Testis (tissue), 5 donors: ENCODE measurements at regions of chr9 and their contacts with region 1.

Region 1: DNA sequence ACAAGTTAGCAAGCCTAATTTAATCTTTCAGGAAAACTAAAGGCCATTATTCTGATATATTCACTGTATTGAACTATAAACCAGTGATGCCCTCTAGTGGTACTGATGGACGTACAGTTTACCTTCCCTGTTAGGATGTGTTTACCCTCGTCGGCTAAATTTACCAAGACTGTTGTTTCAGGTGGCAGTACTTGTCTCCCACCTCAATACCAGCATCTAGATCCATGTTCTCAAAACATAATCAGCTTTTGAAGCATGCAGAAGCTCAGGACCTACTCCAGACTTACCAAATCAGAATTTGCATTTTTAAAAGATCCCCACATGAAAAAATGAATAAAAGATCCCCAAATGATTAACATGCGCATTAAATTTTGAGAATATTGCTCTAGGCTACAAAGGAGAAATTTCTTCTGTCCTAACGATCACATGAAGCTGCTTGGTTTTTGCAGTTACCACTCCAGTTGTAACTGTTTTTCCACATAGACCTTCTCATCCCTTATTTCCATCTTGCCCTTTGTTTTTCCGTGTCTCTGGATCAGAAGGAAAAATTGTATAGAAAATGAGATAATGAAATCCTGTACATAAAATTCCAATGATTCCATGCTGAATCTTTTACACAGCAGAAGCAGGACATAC is 3.2 kb upstream of the BAAT start:
- DNase-seq: peak; percentile 30
- H3K4me3 ChIP-seq: no peak overlapping the region
- H3K27ac ChIP-seq: no peak overlapping the region
- H3K4me1 ChIP-seq: no peaks in the 10 kb centered on the region
- H3K27me3 ChIP-seq: no peaks in the 10 kb centered on the region
- CTCF ChIP-seq: peak in 2 of 3 experiments; percentile 41 to 43
- POLR2A ChIP-seq: no peak

Region 2: DNA sequence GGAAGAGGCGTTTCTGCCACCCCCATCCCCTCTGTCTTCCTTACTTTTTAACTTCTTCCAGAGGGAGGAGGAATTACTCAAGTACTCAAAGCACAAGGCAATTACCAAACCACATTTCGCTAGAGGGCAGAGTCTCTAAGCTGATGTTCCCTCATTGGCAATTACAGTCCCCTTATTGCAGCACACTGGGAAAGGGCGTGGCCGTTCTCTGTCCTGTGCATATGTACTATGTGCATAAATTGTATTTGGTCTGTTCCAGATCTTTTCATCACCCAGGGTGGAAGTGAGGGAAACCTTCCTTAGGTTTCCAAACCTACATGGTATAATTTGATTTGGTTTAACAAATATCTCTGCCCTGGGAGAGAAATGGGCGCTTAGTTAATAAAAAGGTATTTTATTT is 77.4 kb after region 1 on chr9:
- intact Hi-C with region 1: loop called (anchors 10 kb)
- DNase-seq: peak; percentile 49
- H3K4me3 ChIP-seq: no peak overlapping the region
- H3K27ac ChIP-seq: no peak overlapping the region
- H3K4me1 ChIP-seq: no peaks in the 10 kb centered on the region
- H3K27me3 ChIP-seq: no peaks in the 10 kb centered on the region
- CTCF ChIP-seq: no peak
- POLR2A ChIP-seq: no peak